IMR-90 (cell line): ENCODE measurements at regions of chr1 and their contacts with region 1.

Region 1: DNA sequence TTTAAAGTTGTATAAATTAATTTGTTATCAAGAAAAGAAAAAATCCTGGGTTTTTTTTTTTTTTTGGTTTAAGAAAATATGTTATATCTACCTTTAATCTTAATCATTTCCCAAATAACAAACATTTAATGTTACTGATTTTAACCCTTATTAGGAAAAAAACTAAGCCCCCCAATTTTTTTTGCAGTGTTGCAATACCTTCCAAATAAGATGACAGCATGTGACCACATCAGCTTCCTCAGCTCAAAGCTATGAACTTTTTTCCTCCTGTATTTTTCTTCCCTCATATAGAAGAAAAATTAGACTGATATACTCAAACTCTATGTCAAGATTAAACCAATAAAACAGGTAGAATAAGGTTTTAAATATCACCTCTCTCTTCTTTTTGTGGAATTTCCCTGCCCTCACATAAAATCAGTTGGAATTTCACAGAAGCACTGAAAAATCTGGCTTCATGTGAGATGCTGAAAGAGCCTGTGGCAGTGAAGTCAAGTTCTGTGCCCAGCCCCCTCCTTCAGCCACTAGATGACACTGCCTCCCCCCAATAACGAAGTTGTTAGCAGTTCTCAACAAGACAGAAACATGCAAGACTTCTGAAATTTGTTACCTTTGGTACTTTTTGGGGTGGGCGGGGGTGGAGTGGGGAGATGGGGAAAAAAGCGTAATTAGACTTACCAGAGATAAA is 9.6 kb upstream of the SMYD2 start:
- DNase-seq: no peak
- ATAC-seq: no peak
- H3K4me3 ChIP-seq: no peak overlapping the region
- H3K27ac ChIP-seq: no peak overlapping the region
- H3K4me1 ChIP-seq: no peaks in the 10 kb centered on the region
- H3K27me3 ChIP-seq: peaks cover 10% of the 10 kb centered on the region
- CTCF ChIP-seq: no peak
- POLR2A ChIP-seq: no peak
- RAD21 ChIP-seq: no peak

Region 2: DNA sequence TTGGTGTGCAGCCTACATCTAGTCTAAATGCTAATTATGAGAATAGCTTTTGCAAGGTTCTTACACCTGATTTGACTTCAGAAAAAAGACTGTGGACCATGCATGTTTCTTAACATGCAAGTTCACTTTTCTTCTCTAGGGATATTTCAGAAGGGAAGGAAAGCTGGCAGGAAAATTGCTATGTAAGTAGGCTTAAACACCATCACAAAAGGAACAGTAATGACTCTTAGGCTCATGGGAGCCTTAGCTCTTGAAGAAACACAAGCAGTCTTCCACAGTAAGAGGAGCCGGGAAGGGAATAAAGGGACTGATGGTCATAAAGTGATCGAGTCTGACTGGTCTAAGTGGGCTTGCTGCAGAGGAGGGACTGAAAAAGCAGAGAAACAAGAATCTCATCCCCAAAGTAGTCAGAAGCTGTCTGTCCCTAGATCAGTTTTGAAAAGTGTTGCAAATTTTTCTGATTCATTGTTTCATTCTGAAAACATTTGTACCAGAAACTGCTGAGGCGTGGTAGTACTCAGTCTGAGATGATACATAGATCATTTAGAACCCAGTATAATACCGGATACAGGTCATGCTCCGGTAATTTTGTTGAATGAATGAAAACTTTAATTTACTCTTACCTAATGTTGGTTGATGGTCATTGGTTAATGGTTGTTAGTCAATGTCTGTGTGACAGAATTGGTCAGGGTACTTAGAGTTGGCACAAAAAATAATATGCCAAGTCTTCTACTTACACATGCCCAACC is 50.6 kb after region 1 on chr1:
- CTCF ChIA-PET with region 1: no interaction called
- POLR2A ChIA-PET with region 1: no interaction called
- dilution Hi-C with region 1: no loop called
- in situ Hi-C with region 1: loop called (anchors 5 kb)
- intact Hi-C with region 1: no loop called
- DNase-seq: no peak
- ATAC-seq: no peak
- H3K4me3 ChIP-seq: no peak overlapping the region
- H3K27ac ChIP-seq: no peak overlapping the region
- H3K4me1 ChIP-seq: no peaks in the 10 kb centered on the region
- H3K27me3 ChIP-seq: no peaks in the 10 kb centered on the region
- CTCF ChIP-seq: no peak
- POLR2A ChIP-seq: no peak
- RAD21 ChIP-seq: no peak